ENCODE measurements at regions of chr11 and their contacts with region 1.

Region 1: DNA sequence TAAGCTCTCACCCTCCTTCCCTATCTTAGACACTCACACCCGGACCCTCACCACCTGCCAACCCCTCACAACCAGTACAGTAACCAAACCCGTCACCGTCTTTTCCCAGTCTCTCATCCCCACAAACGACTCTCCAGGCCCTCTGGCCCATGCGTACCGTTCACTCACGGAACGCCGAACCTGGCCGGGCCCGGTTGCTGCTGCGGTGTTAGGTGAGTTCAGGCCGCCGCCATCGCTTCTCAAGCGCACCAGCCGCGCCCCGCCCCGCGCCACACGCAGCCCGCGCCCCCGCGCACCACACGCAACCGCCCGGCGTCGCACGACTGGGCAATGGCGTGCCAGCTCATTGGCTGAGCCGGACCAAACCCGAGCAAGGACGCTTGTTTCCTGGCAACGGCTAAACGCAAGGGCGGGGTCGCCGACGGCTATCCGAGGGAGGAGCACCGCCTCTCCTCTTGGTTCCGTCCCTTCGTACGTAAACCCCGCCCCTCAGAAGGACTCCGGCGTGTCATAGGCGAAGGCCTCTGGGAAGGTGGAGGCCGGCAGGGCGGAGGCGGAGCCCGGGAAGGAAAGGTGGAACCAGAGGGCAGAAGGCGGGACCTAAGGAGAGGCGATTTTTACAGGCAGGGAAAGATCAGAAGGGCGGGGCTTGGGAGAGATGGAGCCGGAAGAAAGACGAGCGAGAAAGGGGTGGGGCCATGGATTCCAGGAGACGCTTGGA is at the start of gene FHIP1B:
- DNase-seq: peak; percentile 100
- H3K4me3 Mint-ChIP-seq: peak within 1 kb of the TSS; percentile 94
- H3K27ac Mint-ChIP-seq: peak within 1 kb of the TSS; percentile 82
- H3K4me1 Mint-ChIP-seq: peaks cover 32% of the 10 kb centered on the region
- H3K27me3 Mint-ChIP-seq: no peaks in the 10 kb centered on the region
- total RNA-seq, gene FHIP1B: 13.0 to 13.1 TPM

Region 2: GRCh38 chr11:4607781-4608666 is 1626.5 kb before region 1 on chr11 and contains the start of gene TRIM68:
- CTCF ChIA-PET with region 1: no interaction called
- intact Hi-C with region 1: loop called (anchors 10 kb)
- DNase-seq: peak; percentile 97
- H3K4me3 Mint-ChIP-seq: peak within 1 kb of the TSS; percentile 94
- H3K27ac Mint-ChIP-seq: peak within 1 kb of the TSS; percentile 88
- H3K4me1 Mint-ChIP-seq: peaks cover 45% of the 10 kb centered on the region
- H3K27me3 Mint-ChIP-seq: no peaks in the 10 kb centered on the region
- total RNA-seq, gene TRIM68: 11.3 to 15.4 TPM

Region 3: DNA sequence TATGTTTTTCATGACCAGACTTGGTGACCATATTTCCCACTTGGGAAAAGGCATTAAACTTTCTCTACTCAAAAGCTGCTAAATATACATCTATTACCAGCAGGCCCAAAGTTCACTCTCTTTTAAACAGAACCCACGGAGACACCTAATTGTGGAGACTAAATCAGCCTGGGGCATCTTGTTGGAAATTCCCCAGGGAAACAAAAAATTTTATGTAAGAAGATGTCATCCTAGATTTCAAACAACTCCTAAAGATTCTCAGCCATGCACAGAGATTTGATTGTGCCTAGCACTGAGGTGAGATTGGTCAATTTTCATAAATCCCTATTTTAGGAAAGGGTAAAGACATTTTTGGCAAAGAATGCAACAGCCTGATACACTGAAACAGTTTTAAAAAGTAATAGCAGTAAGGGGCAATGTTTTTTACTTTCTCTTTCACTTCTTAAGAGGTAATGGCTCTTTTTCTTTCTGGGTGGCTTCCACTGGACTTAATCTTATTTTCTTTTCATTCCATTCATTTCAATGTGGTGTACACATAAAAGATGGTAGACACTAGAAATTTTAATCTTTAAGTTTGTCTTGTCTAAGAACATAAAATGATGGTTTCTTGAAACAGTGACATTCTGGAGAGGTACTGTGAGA is 416.2 kb before region 1 on chr11:
- CTCF ChIA-PET with region 1: no interaction called
- intact Hi-C with region 1: loop called (anchors 5 kb)
- DNase-seq: no peak
- H3K4me3 Mint-ChIP-seq: peak overlapping the region; percentile 44
- H3K27ac Mint-ChIP-seq: peak overlapping the region; percentile 51
- H3K4me1 Mint-ChIP-seq: peaks cover 12% of the 10 kb centered on the region
- H3K27me3 Mint-ChIP-seq: peaks cover 3% of the 10 kb centered on the region

Region 4: DNA sequence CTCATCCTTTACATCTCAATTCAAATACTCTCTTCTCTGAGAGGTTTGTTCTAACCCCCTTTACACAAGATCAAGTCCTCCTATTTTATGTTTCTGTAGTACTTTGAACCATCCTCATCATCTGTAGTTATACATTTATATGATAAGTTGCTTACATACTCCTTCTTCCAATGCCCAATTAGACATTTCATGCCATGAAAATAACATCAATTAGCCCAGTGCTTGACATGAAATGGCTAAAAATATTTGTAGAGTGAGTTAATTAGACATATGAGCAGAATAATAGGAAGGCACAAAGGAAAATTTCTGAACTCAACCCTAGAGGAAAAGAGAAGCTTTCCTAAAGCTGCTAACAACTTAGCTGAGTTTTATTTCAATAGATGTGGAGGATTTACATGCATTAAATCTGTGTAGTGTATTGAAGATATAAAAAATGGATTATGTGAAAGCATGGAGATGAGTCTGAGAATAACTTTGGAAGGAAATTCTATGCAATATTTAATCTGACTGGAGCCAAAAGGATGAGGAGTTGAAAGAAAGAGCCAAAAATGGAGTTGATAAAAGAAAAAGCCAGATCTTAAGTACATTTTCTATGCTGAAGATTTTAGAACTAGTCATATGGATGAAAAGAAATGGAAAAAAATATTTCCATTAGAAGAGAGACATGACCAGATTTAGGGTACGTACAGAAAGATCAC is 203.7 kb before region 1 on chr11 and contains the start of gene OR56A1:
- CTCF ChIA-PET with region 1: no interaction called
- intact Hi-C with region 1: no loop called
- DNase-seq: no peak
- H3K4me3 Mint-ChIP-seq: no peak within 1 kb of the TSS
- H3K27ac Mint-ChIP-seq: no peak within 1 kb of the TSS
- H3K4me1 Mint-ChIP-seq: no peaks in the 10 kb centered on the region
- H3K27me3 Mint-ChIP-seq: peaks cover 12% of the 10 kb centered on the region
- total RNA-seq, gene OR56A1: not detected

Region 5: GRCh38 chr11:6315811-6316425 is 81.4 kb after region 1 on chr11:
- CTCF ChIA-PET with region 1: interaction called, 3 read pairs
- intact Hi-C with region 1: loop called (anchors 1 kb)
- DNase-seq: peak; percentile 46
- H3K4me3 Mint-ChIP-seq: no peak overlapping the region
- H3K27ac Mint-ChIP-seq: no peak overlapping the region
- H3K4me1 Mint-ChIP-seq: peaks cover 9% of the 10 kb centered on the region
- H3K27me3 Mint-ChIP-seq: peaks cover 44% of the 10 kb centered on the region

Region 6: GRCh38 chr11:6473481-6474422 is 239.2 kb after region 1 on chr11 and contains the start of gene TRIM3:
- CTCF ChIA-PET with region 1: no interaction called
- intact Hi-C with region 1: loop called (anchors 2 kb)
- DNase-seq: peak; percentile 62
- H3K4me3 Mint-ChIP-seq: peak within 1 kb of the TSS; percentile 80
- H3K27ac Mint-ChIP-seq: no peak within 1 kb of the TSS
- H3K4me1 Mint-ChIP-seq: peaks cover 19% of the 10 kb centered on the region
- H3K27me3 Mint-ChIP-seq: no peaks in the 10 kb centered on the region
- total RNA-seq, gene TRIM3: 7.7 to 9.4 TPM

Region 7: DNA sequence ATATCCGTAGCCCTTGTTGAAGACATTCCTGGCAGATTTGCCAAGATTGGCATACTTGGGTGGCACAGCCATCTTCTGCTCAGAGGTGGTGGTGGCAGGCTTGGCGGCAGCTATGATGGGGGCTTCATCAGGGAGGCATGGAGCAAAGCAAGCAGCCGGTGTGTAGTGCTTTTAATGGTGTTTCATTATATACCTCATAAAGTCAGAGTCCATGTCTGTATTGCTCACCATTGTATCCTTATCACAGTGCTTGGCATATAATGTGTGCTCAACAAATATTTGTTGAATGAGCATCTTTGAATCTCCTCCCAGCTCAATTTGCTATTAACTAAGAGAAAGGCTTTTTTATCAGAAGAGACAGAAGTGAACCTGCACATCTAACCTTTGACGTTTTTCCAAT is 254.8 kb after region 1 on chr11:
- CTCF ChIA-PET with region 1: no interaction called
- intact Hi-C with region 1: no loop called
- DNase-seq: no peak
- H3K4me3 Mint-ChIP-seq: no peak overlapping the region
- H3K27ac Mint-ChIP-seq: no peak overlapping the region
- H3K4me1 Mint-ChIP-seq: no peaks in the 10 kb centered on the region
- H3K27me3 Mint-ChIP-seq: no peaks in the 10 kb centered on the region

Region 8: GRCh38 chr11:6612213-6613041 is 377.9 kb after region 1 on chr11 and contains the start of gene TAF10:
- CTCF ChIA-PET with region 1: no interaction called
- intact Hi-C with region 1: loop called (anchors 1 kb)
- DNase-seq: peak; percentile 97
- H3K4me3 Mint-ChIP-seq: peak within 1 kb of the TSS; percentile 87
- H3K27ac Mint-ChIP-seq: peak within 1 kb of the TSS; percentile 90
- H3K4me1 Mint-ChIP-seq: peaks cover 39% of the 10 kb centered on the region
- H3K27me3 Mint-ChIP-seq: no peaks in the 10 kb centered on the region
- total RNA-seq, gene TAF10: 151 to 156 TPM

Region 9: DNA sequence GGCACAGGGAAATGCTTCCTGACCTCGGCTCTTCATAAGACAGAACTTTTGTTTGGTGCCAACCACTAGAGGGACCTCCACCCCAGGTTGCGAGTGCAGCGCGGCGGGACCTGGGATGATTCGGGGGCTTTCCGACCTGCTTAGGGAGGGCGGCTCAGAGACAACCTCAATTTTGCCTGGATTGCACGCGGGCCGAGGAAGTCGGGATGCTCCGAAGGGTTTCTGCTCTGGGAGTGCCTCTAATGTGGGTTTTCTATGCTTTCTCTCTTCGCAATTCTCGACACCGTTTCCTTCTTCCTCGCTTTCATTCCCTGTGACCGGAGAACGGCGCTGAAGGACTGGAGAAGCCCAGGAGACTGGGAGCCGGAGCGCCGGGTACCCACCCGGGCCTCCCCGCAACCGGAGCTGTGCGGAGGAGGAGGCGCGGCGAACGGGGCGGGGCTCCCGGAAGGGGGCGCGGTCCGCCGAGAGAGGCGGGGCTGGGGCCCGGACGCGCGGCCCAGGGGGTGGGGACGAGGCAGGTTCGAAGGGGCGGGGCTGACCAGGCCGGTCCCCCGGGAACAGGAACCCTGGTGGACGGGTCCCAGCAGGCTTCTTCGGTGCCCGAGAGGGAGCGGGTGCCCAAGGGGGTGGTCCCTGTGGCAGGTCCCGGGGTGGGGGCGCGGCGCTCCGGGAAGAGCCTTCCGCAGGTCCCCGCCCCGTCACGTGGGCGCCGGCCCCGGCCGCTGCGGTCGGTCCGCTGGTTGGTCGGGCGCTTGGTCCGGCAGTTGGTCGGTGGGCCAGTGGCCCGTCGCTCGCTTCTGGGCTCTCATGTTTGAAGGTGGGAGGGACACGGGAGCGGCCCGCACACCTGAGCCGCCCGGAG is 1278.9 kb after region 1 on chr11 and contains the start of gene PPFIBP2:
- CTCF ChIA-PET with region 1: no interaction called
- intact Hi-C with region 1: loop called (anchors 10 kb)
- DNase-seq: peak; percentile 87
- H3K4me3 Mint-ChIP-seq: peak within 1 kb of the TSS; percentile 86
- H3K27ac Mint-ChIP-seq: peak within 1 kb of the TSS; percentile 90
- H3K4me1 Mint-ChIP-seq: peaks cover 48% of the 10 kb centered on the region
- H3K27me3 Mint-ChIP-seq: no peaks in the 10 kb centered on the region
- total RNA-seq, gene PPFIBP2: 22.2 to 26.1 TPM